ENCODE measurements at regions of chr1 and their contacts with region 1.

Region 1: GRCh38 chr1:201084295-201084694 is 27.9 kb downstream of the CACNA1S start:
- DNase-seq: no peak

Region 2: DNA sequence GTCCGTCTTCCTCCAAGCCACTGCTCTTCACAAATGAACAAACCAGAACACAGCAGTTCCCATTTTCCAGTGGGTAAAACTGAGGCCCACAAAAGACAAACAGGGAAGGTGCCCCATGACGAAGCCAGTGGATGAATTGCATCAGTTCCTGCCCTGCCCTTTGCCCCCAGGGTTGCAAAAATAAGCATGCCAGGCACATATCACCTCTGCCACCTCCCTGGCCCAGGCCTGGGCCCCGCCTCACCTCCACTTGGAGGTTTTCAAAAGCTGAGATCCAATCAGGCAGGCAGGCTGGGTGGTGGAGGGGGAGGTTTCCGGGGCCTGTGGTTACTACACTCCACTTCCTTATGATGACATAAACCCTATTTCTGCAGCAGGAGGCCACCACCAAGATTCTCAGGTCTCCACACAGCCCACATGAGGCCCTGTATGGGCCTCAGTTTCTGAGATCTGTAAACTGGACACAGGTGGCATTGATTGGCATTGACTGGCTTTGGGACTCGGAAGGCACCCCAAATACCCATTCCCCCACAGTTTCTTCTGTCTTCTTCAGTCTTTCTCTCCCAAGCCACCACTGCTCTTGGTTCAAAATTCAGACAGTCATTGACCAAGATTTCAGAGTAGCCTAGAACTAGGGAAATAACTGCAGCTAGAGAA is 64.8 kb before region 1 on chr1:
- intact Hi-C with region 1: loop called in 1 of 2 experiments (anchors 5 kb)
- DNase-seq: peak; percentile 91

Measured in posterior vena cava (tissue), 2 donors.